ENCODE measurements at regions of chr17 and their contacts with region 1.

Region 1: GRCh38 chr17:58006924-58007780 is at the start of gene SRSF1:
- DNase-seq: peak; percentile 99
- ATAC-seq: peak; percentile 99
- H3K4me3 ChIP-seq: peak within 1 kb of the TSS; percentile 83 to 90
- H3K27ac ChIP-seq: peak within 1 kb of the TSS; percentile 58 to 94
- H3K4me1 ChIP-seq: peaks cover 0 to 7% of the 10 kb centered on the region in 2 donors
- H3K27me3 ChIP-seq: no peaks in the 10 kb centered on the region
- total RNA-seq, gene SRSF1: 138 to 147 TPM

Region 2: GRCh38 chr17:57597531-57598453 is 409.4 kb before region 1 on chr17:
- intact Hi-C with region 1: no loop called
- DNase-seq: peak in 1 of 2 donors; percentile 83
- ATAC-seq: peak; percentile 85
- H3K4me3 ChIP-seq: no peak overlapping the region
- H3K27ac ChIP-seq: no peak overlapping the region
- H3K4me1 ChIP-seq: peaks cover 0 to 3% of the 10 kb centered on the region in 2 donors
- H3K27me3 ChIP-seq: no peaks in the 10 kb centered on the region

Region 3: DNA sequence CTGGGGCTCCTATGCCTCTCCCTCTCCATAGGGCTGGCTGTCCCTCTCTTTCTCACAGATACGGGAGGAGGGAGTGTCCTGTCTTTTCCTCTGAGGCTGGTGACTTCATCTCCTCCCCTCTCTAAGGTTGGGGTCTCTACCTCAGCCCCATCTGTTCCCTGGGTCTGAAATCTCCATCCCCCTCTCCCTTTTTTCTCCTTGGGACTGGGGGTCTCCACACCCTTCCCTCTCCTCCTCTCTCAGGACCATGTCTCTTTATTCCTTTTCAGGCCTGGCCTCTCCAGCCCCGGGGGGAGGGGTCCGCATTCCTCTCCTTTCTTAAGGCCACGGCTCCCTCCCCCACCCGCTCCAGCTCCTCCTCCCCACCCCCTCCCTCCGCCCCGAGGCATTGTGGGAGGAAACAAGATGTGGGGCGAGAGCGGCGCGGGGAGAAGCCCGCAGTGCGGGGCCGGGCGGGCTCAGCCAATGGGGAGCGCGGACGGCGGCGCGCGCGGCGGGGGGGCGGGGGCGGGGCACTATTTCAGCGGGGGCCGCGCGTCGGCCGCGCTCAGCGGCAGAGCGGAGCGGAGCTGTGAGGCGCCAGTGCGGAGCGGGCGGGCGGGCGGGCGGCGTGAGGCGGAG is 75.8 kb after region 1 on chr17 and contains the start of gene DYNLL2:
- intact Hi-C with region 1: loop called (anchors 2 to 5 kb)
- DNase-seq: peak; percentile 96 to 97
- ATAC-seq: peak; percentile 94
- H3K4me3 ChIP-seq: peak within 1 kb of the TSS; percentile 94 to 98
- H3K27ac ChIP-seq: peak within 1 kb of the TSS; percentile 88 to 98
- H3K4me1 ChIP-seq: peaks cover 3% of the 10 kb centered on the region in 2 donors
- H3K27me3 ChIP-seq: no peaks in the 10 kb centered on the region
- total RNA-seq, gene DYNLL2: 29.3 to 35.7 TPM

Region 4: GRCh38 chr17:58232707-58233156 is 225.6 kb after region 1 on chr17:
- intact Hi-C with region 1: no loop called
- DNase-seq: no peak
- ATAC-seq: no peak
- H3K4me3 ChIP-seq: no peak overlapping the region
- H3K27ac ChIP-seq: no peak overlapping the region
- H3K4me1 ChIP-seq: no peaks in the 10 kb centered on the region
- H3K27me3 ChIP-seq: peaks cover 0 to 3% of the 10 kb centered on the region in 2 donors